WTC11 (cell line): ENCODE measurements at regions of chr2 and their contacts with region 1.

Region 1: DNA sequence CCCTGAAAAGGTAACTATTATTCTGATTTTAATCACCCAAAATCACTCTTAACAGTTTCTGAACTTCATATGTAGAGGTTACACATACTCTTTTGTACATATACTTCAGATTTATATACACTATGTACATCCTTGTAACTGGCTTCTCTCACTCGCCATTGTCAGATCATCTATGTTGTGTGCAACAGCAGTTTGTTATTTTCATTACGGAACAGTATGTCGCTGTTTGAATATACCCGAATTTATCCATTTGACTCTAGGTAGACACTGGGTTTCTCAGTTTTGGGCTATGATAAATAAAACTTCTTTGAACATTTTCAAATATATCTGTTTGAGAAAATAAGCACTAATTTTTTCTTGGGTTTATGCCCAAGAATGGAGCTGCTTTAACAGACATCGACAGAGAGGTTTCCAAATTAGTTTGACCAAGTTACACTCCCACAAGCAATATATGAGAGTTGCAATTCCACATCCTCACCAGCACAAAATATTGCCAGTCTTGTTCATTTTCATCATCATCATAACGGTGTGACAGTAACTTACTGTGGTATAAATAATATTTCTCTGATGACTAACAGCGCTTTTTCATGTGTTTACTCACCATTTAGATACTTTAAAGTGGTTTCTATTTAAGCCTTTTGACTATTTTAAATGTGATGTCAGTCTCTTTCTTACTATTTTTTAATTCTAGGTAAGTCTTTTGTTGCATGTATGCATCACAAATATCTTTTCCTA is 80.9 kb downstream of the SMC6 start:
- DNase-seq: no peak
- ATAC-seq: no peak
- H3K4me3 Mint-ChIP-seq: no peak overlapping the region
- H3K27ac Mint-ChIP-seq: no peak overlapping the region
- H3K4me1 Mint-ChIP-seq: no peaks in the 10 kb centered on the region
- H3K27me3 Mint-ChIP-seq: no peaks in the 10 kb centered on the region
- CTCF ChIP-seq: no peak

Region 2: GRCh38 chr2:17309741-17310339 is 362.9 kb before region 1 on chr2:
- CTCF ChIA-PET with region 1: interaction called, 12 read pairs
- POLR2A ChIA-PET with region 1: no interaction called
- DNase-seq: peak; percentile 69
- ATAC-seq: peak; percentile 92
- H3K4me3 Mint-ChIP-seq: no peak overlapping the region
- H3K27ac Mint-ChIP-seq: no peak overlapping the region
- H3K4me1 Mint-ChIP-seq: peaks cover 28% of the 10 kb centered on the region
- H3K27me3 Mint-ChIP-seq: no peaks in the 10 kb centered on the region; the same call in 1 of the 2 replicates
- CTCF ChIP-seq: peak; percentile 68

Region 3: DNA sequence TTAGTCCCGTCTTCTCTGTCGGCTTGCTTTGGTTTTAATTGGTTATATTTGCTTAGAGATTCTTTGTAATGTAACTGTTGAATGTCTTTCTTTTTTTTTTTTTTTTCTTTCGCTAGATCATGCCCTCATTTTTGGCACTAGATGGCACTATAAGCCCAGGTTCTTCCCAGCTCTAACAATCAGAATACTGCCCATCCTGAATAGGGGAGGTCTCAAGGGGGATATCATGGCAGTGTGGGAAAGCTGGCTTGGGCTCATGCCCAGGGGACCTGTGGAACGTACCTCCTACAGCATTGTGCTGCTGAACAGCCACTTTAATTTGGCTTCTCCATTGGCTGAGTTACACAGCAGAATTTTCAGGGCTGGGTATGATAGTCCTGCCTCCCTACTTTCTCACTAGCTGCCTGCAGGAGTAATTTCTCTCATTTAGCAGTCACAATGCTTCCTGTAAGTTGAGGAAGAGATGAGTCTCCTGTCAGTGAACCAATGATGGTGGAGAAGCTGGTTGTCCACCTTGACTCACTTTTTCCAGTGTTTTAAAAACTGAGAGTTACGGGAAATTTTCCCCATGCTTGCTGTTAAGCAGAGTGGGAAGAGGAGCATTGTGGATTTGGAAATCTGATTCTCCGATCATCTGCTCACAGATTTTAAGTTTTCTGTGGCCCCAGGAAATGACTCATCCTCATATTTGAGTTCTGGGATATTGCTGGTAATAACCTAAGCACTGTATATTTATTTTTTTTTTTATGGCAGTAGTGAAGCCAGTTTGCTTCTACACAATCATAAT is 201.7 kb before region 1 on chr2:
- CTCF ChIA-PET with region 1: interaction called, 52 read pairs
- POLR2A ChIA-PET with region 1: no interaction called
- DNase-seq: peak; percentile 34
- ATAC-seq: peak; percentile 100
- H3K4me3 Mint-ChIP-seq: no peak overlapping the region
- H3K27ac Mint-ChIP-seq: no peak overlapping the region
- H3K4me1 Mint-ChIP-seq: peaks cover 20% of the 10 kb centered on the region
- H3K27me3 Mint-ChIP-seq: peaks cover 6% of the 10 kb centered on the region
- CTCF ChIP-seq: 0 out of 2 replicates have a peak, but pooled peaks have one; percentile 49

Region 4: DNA sequence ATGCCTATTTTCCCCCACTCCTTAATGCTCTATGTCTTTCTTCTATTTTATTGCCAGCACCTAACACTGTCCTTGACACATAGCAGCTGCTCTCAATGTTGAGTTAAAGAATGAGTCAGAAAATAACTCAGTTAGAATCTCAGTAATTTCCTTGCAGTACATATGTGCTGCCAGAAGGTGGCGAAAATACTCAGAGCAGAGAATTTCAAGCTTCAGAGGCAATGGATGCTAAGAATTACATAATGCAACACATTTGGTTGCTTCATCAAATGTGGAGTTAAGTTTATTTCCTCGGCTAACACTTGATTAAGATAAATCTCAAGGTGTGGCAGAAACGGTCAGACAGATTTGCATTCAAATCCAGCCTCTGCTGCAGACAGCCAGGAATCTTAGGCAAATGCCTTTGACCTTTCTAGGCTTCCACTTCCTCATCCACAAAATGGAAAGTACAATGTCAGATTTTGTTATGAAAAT is 26.6 kb before region 1 on chr2:
- CTCF ChIA-PET with region 1: interaction called, 29 read pairs
- POLR2A ChIA-PET with region 1: no interaction called
- DNase-seq: peak; percentile 40
- ATAC-seq: peak; percentile 54
- H3K4me3 Mint-ChIP-seq: no peak overlapping the region
- H3K27ac Mint-ChIP-seq: no peak overlapping the region
- H3K4me1 Mint-ChIP-seq: peaks cover 42% of the 10 kb centered on the region
- H3K27me3 Mint-ChIP-seq: no peaks in the 10 kb centered on the region
- CTCF ChIP-seq: peak; percentile 79

Region 5: GRCh38 chr2:17658251-17658843 is 14.4 kb before region 1 on chr2:
- CTCF ChIA-PET with region 1: interaction called, 12 read pairs
- POLR2A ChIA-PET with region 1: no interaction called
- DNase-seq: no peak
- ATAC-seq: no peak
- H3K4me3 Mint-ChIP-seq: no peak overlapping the region
- H3K27ac Mint-ChIP-seq: no peak overlapping the region
- H3K4me1 Mint-ChIP-seq: peaks cover 8% of the 10 kb centered on the region; the same call in 1 of the 2 replicates
- H3K27me3 Mint-ChIP-seq: no peaks in the 10 kb centered on the region
- CTCF ChIP-seq: no peak